Adrenal gland (tissue), 19 donors: ENCODE measurements at regions of chr6 and their contacts with region 1.

Region 1: GRCh38 chr6:42879372-42880239 is at the start of gene RPL7L1:
- DNase-seq: peak; percentile 83 to 94 (median 88)
- H3K4me3 ChIP-seq: peak within 1 kb of the TSS; percentile 71 to 85 (median 77)
- H3K27ac ChIP-seq: peak within 1 kb of the TSS; percentile 83 to 94 (median 90)
- H3K4me1 ChIP-seq: peaks cover 17 to 26% of the 10 kb centered on the region in 2 donors
- H3K27me3 ChIP-seq: no peaks in the 10 kb centered on the region
- CTCF ChIP-seq: peak in 4 of 6 experiments; percentile 16 to 46 (median 38)
- POLR2A ChIP-seq: peak; percentile 12 to 83
- total RNA-seq, gene RPL7L1: 90.2 to 130 (median 94.9) TPM

Region 2: DNA sequence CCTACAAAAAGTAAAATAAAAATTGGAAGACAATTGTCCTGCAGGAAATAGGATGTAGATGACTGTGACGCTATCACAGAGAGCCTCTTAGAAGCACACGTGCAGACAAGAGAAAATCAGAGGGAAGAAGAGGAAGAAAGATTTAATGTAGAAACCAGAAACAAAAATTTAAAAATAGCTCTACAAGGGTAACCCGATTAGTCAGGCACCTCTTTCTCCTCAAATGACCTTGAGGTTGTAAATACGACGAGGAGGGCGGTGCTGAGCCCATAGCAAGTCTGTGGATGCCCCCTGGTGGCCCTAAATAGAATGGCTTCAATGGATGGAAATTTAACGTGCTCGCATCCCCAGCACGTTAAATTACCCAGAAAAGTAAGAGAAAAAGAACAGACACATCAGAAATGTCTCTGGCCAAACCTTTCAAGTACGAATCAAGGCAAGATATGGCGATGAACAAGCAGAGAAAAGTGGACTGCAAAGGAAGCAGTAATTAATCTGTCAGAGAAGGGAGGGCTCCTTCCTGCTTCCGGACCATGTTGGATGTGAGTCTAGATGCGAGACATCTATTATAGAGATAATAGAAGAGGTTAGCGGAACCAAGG is 153.0 kb before region 1 on chr6:
- intact Hi-C with region 1: loop called in 1 of 2 experiments (anchors 5 kb)
- DNase-seq: peak; percentile 78 to 93 (median 89)
- H3K4me3 ChIP-seq: peak overlapping the region in 2 of 4 donors; percentile 30 to 49
- H3K27ac ChIP-seq: peak overlapping the region in 4 of 5 donors; percentile 52 to 76 (median 60)
- H3K4me1 ChIP-seq: peaks cover 7 to 19% of the 10 kb centered on the region in 2 donors
- H3K27me3 ChIP-seq: no peaks in the 10 kb centered on the region
- CTCF ChIP-seq: peak; percentile 88 to 97 (median 94)
- POLR2A ChIP-seq: no peak

Region 3: GRCh38 chr6:42756722-42757121 is 122.9 kb before region 1 on chr6:
- intact Hi-C with region 1: no loop called
- DNase-seq: peak in 1 of 7 donors; percentile 4
- H3K4me3 ChIP-seq: no peak overlapping the region
- H3K27ac ChIP-seq: no peak overlapping the region
- H3K4me1 ChIP-seq: peaks cover 0 to 11% of the 10 kb centered on the region in 2 donors
- H3K27me3 ChIP-seq: no peaks in the 10 kb centered on the region
- CTCF ChIP-seq: no peak
- POLR2A ChIP-seq: no peak